ENCODE measurements at regions of chr2 and their contacts with region 1.

Region 1: DNA sequence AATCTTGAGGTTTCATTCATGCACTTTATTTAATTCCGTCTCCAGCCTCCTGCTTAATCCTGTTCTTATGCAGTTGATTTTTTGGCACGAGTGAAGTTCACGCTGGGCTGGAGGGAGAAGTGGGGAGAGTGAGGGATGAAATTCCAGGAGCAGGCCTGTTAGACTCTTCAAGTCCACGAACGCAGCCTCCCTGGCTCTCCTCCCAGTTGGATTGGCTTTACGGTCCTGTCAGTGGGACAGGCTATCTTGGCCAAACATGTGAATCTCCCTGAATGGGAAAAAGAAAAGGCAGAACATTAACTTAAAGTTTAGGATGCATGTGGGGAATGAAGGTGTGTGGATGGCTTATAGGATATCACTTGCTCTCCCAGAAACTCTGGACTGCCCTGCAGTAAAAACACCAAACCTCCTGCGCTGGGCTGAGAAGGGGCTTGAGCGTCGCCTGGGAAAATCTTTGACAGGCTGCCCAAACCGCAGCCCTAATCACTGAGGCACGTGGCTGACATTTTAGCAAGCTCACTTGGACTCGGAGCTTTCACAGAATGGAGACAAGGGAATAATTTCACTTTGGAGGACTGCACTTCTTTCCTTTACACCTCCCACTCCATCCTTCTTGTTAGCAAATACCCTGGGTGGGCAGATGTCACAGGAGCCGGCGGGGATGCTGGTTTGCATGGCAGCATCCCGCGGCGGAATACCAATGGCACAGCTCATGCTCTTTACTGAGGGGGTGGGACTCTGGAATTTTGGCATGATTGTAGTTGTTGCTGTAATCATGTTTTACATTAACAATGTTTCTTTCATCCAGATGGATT is 93.9 kb downstream of the ACKR3 start:
- DNase-seq: peak; percentile 68 to 77
- ATAC-seq: peak; percentile 54 to 81 (median 63)
- H3K4me3 ChIP-seq: no peak overlapping the region
- H3K27ac ChIP-seq: peak overlapping the region in 9 of 10 donors; percentile 35 to 85 (median 59)
- H3K4me1 ChIP-seq: peaks cover 5 to 50% (median 43%) of the 10 kb centered on the region in 9 donors
- H3K27me3 ChIP-seq: no peaks in the 10 kb centered on the region
- CTCF ChIP-seq: no peak

Region 2: DNA sequence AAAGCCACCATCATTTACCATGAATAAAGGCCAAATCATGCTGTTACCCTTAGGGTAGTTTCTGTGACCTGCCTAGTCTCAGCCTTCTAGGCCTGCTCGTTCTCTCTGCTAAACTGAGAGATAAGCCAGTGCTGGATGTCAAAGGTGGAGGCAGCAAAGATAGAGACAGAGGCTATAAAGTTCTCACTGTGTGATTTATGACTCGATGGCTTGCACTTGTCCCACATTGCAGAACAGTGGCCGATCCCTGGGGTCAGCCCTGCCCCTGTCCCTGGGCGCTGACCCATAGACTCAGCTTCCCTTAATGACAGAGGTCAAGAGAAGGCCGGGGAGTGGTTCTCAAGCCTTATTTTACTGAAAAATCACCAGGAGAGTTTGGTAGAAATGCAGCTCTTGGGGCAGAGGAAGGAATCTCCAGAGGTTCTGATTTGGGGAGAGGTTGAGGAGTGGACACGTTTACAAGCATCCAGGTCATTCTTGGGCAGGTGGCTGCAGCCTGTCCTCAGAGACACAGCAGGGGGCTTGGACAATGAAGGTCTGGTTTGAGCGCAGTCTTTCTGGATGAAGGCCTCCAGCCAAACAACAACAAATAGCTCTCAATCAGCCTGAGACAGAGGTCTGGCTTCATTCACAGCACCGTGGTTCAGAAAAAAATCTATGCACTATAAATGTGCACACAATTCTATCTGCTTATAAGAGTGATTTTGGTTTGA is 49.6 kb after region 1 on chr2:
- intact Hi-C with region 1: loop called in 1 of 10 experiments (anchors 1 kb)
- DNase-seq: no peak
- ATAC-seq: no peak
- H3K4me3 ChIP-seq: no peak overlapping the region
- H3K27ac ChIP-seq: no peak overlapping the region
- H3K4me1 ChIP-seq: peaks cover 0 to 44% (median 10%) of the 10 kb centered on the region in 9 donors
- H3K27me3 ChIP-seq: peaks cover 0 to 11% (median 0%) of the 10 kb centered on the region in 7 donors
- CTCF ChIP-seq: no peak